ENCODE measurements at regions of chr16 and their contacts with region 1.

Region 1: GRCh38 chr16:50024684-50025536 is at the start of gene CNEP1R1:
- DNase-seq: peak; percentile 93
- H3K4me3 ChIP-seq: peak within 1 kb of the TSS; percentile 85
- H3K27ac ChIP-seq: no peak within 1 kb of the TSS
- H3K27me3 ChIP-seq: no peaks in the 10 kb centered on the region
- CTCF ChIP-seq: peak; percentile 100
- polyA plus RNA-seq, gene CNEP1R1: 22.4 and 33.0 TPM in 2 replicates

Region 2: GRCh38 chr16:49890876-49891275 is 134.0 kb before region 1 on chr16:
- CTCF ChIA-PET with region 1: no interaction called
- POLR2A ChIA-PET with region 1: no interaction called
- DNase-seq: no peak
- H3K4me3 ChIP-seq: no peak overlapping the region
- H3K27ac ChIP-seq: no peak overlapping the region
- H3K27me3 ChIP-seq: no peaks in the 10 kb centered on the region
- CTCF ChIP-seq: no peak

Region 3: GRCh38 chr16:50004239-50004638 is 20.7 kb before region 1 on chr16:
- CTCF ChIA-PET with region 1: interaction called, 13 read pairs
- POLR2A ChIA-PET with region 1: no interaction called
- DNase-seq: no peak
- H3K4me3 ChIP-seq: no peak overlapping the region
- H3K27ac ChIP-seq: no peak overlapping the region
- H3K27me3 ChIP-seq: no peaks in the 10 kb centered on the region
- CTCF ChIP-seq: no peak

Region 4: DNA sequence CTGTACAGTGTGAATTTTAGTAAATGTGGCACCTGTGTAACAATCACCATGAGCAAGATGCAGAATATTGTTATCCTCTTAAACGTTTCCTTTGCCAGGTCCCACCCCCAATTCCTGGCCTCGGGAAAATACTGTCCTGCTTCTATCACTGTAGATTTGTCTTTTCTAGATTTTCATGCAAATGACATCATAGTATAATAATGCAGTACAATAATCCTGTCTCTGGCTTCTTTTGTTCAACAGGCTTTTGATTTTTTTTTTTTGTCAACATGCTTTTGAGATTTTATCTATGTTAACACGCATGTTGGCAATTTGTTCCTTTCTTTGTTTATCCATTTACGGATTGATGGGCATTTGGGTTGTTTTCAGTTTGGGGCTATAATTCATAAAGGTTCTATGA is 20.5 kb after region 1 on chr16:
- CTCF ChIA-PET with region 1: interaction called, 17 read pairs
- POLR2A ChIA-PET with region 1: interaction called, 3 read pairs
- DNase-seq: no peak
- H3K4me3 ChIP-seq: no peak overlapping the region
- H3K27ac ChIP-seq: no peak overlapping the region
- H3K27me3 ChIP-seq: peaks cover 10% of the 10 kb centered on the region
- CTCF ChIP-seq: no peak

Region 5: GRCh38 chr16:50152807-50153452 is 128.0 kb after region 1 on chr16 and contains the start of gene TENT4B:
- CTCF ChIA-PET with region 1: interaction called, 11 read pairs
- POLR2A ChIA-PET with region 1: no interaction called
- DNase-seq: peak; percentile 49
- H3K4me3 ChIP-seq: peak within 1 kb of the TSS; percentile 80
- H3K27ac ChIP-seq: peak within 1 kb of the TSS; percentile 89
- H3K27me3 ChIP-seq: no peaks in the 10 kb centered on the region
- CTCF ChIP-seq: no peak
- polyA plus RNA-seq, gene TENT4B: 6.0 and 8.9 TPM in 2 replicates

Region 6: DNA sequence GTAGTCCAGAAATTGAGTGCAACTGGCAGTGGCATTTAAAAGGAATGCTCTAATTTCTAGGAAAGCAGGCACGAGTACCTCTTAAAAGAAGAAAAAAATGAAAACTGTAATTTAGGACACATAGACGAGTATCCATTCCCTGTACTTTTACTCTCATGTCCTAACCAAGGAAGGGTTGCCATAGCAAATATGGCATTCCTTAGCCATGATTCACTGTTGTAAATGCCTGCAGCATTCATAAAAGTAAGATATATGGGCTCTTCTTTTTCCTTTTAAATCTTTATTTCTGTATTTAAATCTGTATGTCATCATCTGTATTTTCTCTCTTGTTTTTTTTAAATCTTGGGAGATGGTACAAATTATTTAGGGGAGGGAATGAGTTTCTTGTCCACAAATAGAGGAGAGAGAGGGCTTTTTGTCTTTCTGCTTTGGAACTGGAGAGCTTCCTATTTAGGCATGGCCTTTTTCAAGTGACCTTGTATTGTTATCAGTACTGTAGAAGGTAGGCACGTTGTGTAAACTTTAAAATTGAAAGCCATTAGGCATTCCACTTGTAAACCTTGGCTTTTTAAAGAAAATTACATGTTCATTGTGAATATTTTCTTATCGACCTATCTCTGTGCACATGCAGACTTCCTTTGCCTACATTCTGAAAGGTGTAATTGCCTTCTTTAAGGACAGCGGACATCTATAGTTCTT is 178.2 kb after region 1 on chr16:
- CTCF ChIA-PET with region 1: interaction called, 216 read pairs
- POLR2A ChIA-PET with region 1: no interaction called
- DNase-seq: no peak
- H3K4me3 ChIP-seq: no peak overlapping the region
- H3K27ac ChIP-seq: peak overlapping the region; percentile 79
- H3K27me3 ChIP-seq: no peaks in the 10 kb centered on the region
- CTCF ChIP-seq: no peak

Region 7: GRCh38 chr16:50228364-50228868 is 203.5 kb after region 1 on chr16:
- CTCF ChIA-PET with region 1: interaction called, 14 read pairs
- POLR2A ChIA-PET with region 1: no interaction called
- DNase-seq: no peak
- H3K4me3 ChIP-seq: no peak overlapping the region
- H3K27ac ChIP-seq: no peak overlapping the region
- H3K27me3 ChIP-seq: no peaks in the 10 kb centered on the region
- CTCF ChIP-seq: no peak

Region 8: GRCh38 chr16:50368410-50369132 is 343.7 kb after region 1 on chr16 and contains the start of gene BRD7:
- CTCF ChIA-PET with region 1: interaction called, 15 read pairs
- POLR2A ChIA-PET with region 1: no interaction called
- DNase-seq: no peak
- H3K4me3 ChIP-seq: peak within 1 kb of the TSS; percentile 70
- H3K27ac ChIP-seq: no peak within 1 kb of the TSS
- H3K27me3 ChIP-seq: peaks cover 4% of the 10 kb centered on the region
- CTCF ChIP-seq: peak; percentile 30
- polyA plus RNA-seq, gene BRD7: 49.2 and 69.2 TPM in 2 replicates

Measured in AG04450 (cell line).